ENCODE measurements at regions of chr7 and their contacts with region 1.

Region 1: GRCh38 chr7:65373608-65374351 is at the start of gene ZNF92:
- DNase-seq: peak; percentile 93
- H3K4me3 ChIP-seq: peak within 1 kb of the TSS; percentile 61 to 95 (median 88)
- H3K27ac ChIP-seq: peak within 1 kb of the TSS; percentile 59
- H3K4me1 ChIP-seq: no peaks in the 10 kb centered on the region
- H3K27me3 ChIP-seq: no peaks in the 10 kb centered on the region
- CTCF ChIP-seq: no peak
- total RNA-seq, gene ZNF92: 5.2 to 7.2 TPM

Region 2: DNA sequence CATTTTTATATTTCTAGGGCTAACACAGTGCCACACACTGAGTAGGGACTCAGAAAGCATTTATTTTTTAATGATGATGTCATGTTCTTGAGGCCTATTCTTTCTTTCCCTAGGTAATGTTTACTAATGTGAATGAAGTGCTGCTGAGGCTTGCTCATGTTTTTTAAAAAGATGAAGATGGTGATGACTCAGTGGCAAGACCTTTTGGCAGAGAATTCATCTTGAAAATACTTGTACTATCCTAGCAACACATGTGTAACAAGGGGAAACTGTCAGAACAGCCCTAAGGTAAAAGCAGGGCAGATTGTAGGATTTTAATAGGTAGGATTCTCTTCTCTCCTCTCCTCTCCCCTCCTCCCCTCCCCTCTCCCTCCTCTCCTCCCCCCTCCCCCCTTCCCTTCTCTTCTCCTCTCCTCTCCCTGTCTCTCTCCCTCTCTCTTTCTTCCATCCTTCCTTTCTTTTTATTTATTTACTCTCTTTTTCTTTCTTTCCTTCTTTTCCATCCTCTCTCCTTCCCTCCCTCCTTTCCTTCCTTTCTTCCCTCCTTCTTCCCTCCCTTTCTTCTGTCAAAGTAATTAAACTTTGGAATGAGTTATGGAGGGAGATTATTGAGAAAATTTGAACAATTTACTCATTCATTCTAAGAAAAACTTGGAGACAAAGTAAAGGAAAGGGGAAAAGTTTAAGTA is 75.2 kb after region 1 on chr7:
- CTCF ChIA-PET with region 1: no interaction called
- dilution Hi-C with region 1: no loop called
- in situ Hi-C with region 1: no loop called
- intact Hi-C with region 1: loop called (anchors 5 kb)
- DNase-seq: peak; percentile 93
- H3K4me3 ChIP-seq: no peak overlapping the region
- H3K27ac ChIP-seq: peak overlapping the region; percentile 74
- H3K4me1 ChIP-seq: peaks cover 16% of the 10 kb centered on the region
- H3K27me3 ChIP-seq: no peaks in the 10 kb centered on the region
- CTCF ChIP-seq: no peak